ENCODE measurements at regions of chr19 and their contacts with region 1.

Region 1: DNA sequence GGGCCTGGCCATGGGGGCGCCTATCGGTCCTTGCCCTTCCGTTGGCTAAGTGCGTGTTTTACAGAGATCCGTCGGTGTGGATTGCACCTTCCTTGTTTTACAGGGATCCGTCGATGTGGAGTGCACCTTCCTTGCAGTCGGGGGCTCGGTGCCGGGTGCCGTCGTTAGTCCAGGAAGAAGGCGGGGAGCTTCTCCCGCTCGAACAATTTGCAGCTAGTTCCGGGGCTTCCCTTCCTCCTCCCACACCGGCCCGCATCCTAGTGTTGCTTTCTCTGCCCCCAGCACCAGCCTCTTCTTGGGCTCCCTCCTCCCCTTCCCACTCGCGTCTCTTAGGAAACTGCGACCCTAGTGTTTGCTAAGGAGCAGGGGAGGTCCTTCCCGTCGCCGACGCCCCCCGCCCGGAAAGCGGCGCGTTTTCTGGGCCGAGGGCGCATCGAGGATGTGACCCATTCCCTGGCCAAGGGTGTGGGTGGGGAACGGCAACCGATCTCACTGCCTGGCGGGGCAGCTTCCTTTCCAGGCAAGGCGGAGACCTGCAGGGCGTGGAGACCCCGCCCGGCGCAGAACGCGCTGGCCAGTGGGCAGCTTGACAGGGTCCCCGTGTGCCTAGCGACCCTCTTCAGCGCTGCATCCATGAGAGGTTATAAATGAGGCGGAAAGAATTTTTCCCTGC is 75.7 kb upstream of the ZNF91 start:
- DNase-seq: no peak
- H3K4me3 ChIP-seq: no peak overlapping the region
- H3K27ac ChIP-seq: no peak overlapping the region
- H3K4me1 ChIP-seq: no peaks in the 10 kb centered on the region
- H3K27me3 ChIP-seq: peaks cover 3% of the 10 kb centered on the region
- CTCF ChIP-seq: no peak
- POLR2A ChIP-seq: no peak

Region 2: GRCh38 chr19:23321948-23322549 is 149.0 kb before region 1 on chr19:
- intact Hi-C with region 1: loop called (anchors 2 to 5 kb)
- DNase-seq: no peak
- H3K4me3 ChIP-seq: no peak overlapping the region
- H3K27ac ChIP-seq: no peak overlapping the region
- H3K4me1 ChIP-seq: no peaks in the 10 kb centered on the region
- H3K27me3 ChIP-seq: no peaks in the 10 kb centered on the region
- CTCF ChIP-seq: no peak
- POLR2A ChIP-seq: no peak

Region 3: GRCh38 chr19:23512130-23512919 is 41.3 kb after region 1 on chr19:
- intact Hi-C with region 1: no loop called
- DNase-seq: no peak
- H3K4me3 ChIP-seq: no peak overlapping the region
- H3K27ac ChIP-seq: no peak overlapping the region
- H3K4me1 ChIP-seq: no peaks in the 10 kb centered on the region
- H3K27me3 ChIP-seq: no peaks in the 10 kb centered on the region
- CTCF ChIP-seq: no peak
- POLR2A ChIP-seq: no peak